ENCODE measurements at regions of chr11 and their contacts with region 1.

Region 1: GRCh38 chr11:121194731-121195596 is 93.9 kb downstream of the TECTA start:
- DNase-seq: peak; percentile 64
- ATAC-seq: peak; percentile 98
- H3K4me3 ChIP-seq: no peak overlapping the region
- H3K27ac ChIP-seq: no peak overlapping the region
- H3K4me1 ChIP-seq: no peaks in the 10 kb centered on the region
- H3K27me3 ChIP-seq: peaks cover 15% of the 10 kb centered on the region
- CTCF ChIP-seq: peak; percentile 74
- POLR2A ChIP-seq: no peak
- RAD21 ChIP-seq: peak; percentile 72

Region 2: GRCh38 chr11:120539667-120540369 is 655.1 kb before region 1 on chr11:
- CTCF ChIA-PET with region 1: no interaction called
- POLR2A ChIA-PET with region 1: no interaction called
- dilution Hi-C with region 1: no loop called
- in situ Hi-C with region 1: no loop called
- intact Hi-C with region 1: no loop called
- DNase-seq: peak; percentile 67
- ATAC-seq: no peak
- H3K4me3 ChIP-seq: no peak overlapping the region
- H3K27ac ChIP-seq: no peak overlapping the region
- H3K4me1 ChIP-seq: peaks cover 3% of the 10 kb centered on the region; the same call in 1 of the 2 replicates
- H3K27me3 ChIP-seq: no peaks in the 10 kb centered on the region
- CTCF ChIP-seq: no peak
- POLR2A ChIP-seq: no peak
- RAD21 ChIP-seq: no peak

Region 3: GRCh38 chr11:120682866-120683265 is 512.1 kb before region 1 on chr11:
- CTCF ChIA-PET with region 1: interaction called, 3 read pairs
- POLR2A ChIA-PET with region 1: no interaction called
- dilution Hi-C with region 1: no loop called
- in situ Hi-C with region 1: no loop called
- intact Hi-C with region 1: loop called (anchors 10 kb)
- DNase-seq: peak; percentile 82
- ATAC-seq: peak; percentile 85
- H3K4me3 ChIP-seq: no peak overlapping the region
- H3K27ac ChIP-seq: no peak overlapping the region
- H3K4me1 ChIP-seq: peaks cover 3% of the 10 kb centered on the region; the same call in 1 of the 2 replicates
- H3K27me3 ChIP-seq: peaks cover 10% of the 10 kb centered on the region
- CTCF ChIP-seq: no peak
- POLR2A ChIP-seq: no peak
- RAD21 ChIP-seq: no peak

Region 4: GRCh38 chr11:120710354-120711131 is 484.4 kb before region 1 on chr11:
- CTCF ChIA-PET with region 1: no interaction called
- POLR2A ChIA-PET with region 1: no interaction called
- dilution Hi-C with region 1: no loop called
- in situ Hi-C with region 1: no loop called
- intact Hi-C with region 1: loop called (anchors 10 kb)
- DNase-seq: peak; percentile 87
- ATAC-seq: peak; percentile 94
- H3K4me3 ChIP-seq: no peak overlapping the region
- H3K27ac ChIP-seq: peak overlapping the region; percentile 66; the same call in 1 of the 2 replicates
- H3K4me1 ChIP-seq: peaks cover 11% of the 10 kb centered on the region; the same call in 1 of the 2 replicates
- H3K27me3 ChIP-seq: peaks cover 3% of the 10 kb centered on the region; the same call in 1 of the 2 replicates
- CTCF ChIP-seq: no peak
- POLR2A ChIP-seq: no peak
- RAD21 ChIP-seq: no peak

Region 5: DNA sequence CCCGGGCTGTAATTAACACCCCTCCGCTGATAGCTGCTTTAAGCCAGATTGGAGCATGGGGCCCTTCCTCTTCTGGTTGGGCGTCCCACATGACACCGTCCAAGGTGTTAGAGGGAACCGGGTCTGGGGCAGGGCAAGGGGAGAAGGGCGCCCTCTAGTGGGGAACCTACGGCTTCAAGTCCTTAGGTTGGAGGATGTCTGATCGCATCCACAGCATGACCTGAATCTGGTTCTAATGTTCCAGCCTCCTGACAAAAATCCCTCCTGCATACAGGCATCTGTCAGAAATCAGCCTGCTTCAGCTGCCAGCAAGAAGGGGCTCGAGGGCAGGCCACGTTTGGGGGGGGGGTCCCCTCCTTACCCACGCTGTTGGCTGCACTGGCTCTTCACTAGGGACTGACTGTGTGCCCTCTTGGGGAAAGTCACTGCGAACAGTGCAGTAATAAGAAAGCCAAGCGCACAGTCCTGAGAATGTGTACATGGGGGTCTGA is 265.3 kb before region 1 on chr11:
- CTCF ChIA-PET with region 1: interaction called, 3 read pairs
- POLR2A ChIA-PET with region 1: no interaction called
- dilution Hi-C with region 1: no loop called
- in situ Hi-C with region 1: no loop called
- intact Hi-C with region 1: loop called (anchors 5 kb)
- DNase-seq: peak; percentile 26
- ATAC-seq: peak; percentile 65; the same call in 1 of the 2 replicates
- H3K4me3 ChIP-seq: no peak overlapping the region
- H3K27ac ChIP-seq: no peak overlapping the region
- H3K4me1 ChIP-seq: no peaks in the 10 kb centered on the region
- H3K27me3 ChIP-seq: peaks cover 4% of the 10 kb centered on the region; the same call in 1 of the 2 replicates
- CTCF ChIP-seq: peak; percentile 47
- POLR2A ChIP-seq: no peak
- RAD21 ChIP-seq: peak; percentile 48

Region 6: DNA sequence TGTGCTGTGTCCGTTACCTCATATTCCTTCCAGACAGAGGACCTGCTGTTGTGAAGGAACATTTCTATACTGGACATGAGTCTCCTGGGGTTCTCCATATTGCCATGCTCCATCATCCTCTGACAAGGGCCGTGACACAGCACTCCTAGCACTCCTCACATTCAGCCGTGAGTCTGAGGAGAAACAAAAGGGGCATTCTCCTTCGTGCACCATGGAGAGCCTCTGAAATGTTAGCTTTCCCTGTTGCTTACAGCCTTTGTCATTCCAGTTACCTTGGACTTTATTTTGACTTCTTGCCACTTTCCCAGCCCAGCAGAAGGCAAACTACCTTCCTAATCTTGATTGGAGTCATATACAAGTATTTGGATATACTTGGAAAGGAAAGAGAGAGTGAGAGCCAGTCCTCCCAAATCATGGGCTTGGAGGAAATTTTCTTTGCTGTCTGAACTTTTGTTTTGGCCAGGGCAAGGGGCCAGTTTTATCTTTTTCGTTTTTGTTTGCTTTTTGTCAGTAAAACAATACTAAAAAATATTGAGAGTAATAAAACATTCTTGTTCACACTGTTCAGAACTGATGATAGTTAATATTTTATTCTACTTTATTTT is 123.0 kb before region 1 on chr11:
- CTCF ChIA-PET with region 1: no interaction called
- POLR2A ChIA-PET with region 1: no interaction called
- dilution Hi-C with region 1: no loop called
- in situ Hi-C with region 1: no loop called
- intact Hi-C with region 1: no loop called
- DNase-seq: no peak
- ATAC-seq: no peak
- H3K4me3 ChIP-seq: no peak overlapping the region
- H3K27ac ChIP-seq: no peak overlapping the region
- H3K4me1 ChIP-seq: peaks cover 5% of the 10 kb centered on the region; the same call in 1 of the 2 replicates
- H3K27me3 ChIP-seq: no peaks in the 10 kb centered on the region
- CTCF ChIP-seq: no peak
- POLR2A ChIP-seq: no peak
- RAD21 ChIP-seq: no peak

Region 7: DNA sequence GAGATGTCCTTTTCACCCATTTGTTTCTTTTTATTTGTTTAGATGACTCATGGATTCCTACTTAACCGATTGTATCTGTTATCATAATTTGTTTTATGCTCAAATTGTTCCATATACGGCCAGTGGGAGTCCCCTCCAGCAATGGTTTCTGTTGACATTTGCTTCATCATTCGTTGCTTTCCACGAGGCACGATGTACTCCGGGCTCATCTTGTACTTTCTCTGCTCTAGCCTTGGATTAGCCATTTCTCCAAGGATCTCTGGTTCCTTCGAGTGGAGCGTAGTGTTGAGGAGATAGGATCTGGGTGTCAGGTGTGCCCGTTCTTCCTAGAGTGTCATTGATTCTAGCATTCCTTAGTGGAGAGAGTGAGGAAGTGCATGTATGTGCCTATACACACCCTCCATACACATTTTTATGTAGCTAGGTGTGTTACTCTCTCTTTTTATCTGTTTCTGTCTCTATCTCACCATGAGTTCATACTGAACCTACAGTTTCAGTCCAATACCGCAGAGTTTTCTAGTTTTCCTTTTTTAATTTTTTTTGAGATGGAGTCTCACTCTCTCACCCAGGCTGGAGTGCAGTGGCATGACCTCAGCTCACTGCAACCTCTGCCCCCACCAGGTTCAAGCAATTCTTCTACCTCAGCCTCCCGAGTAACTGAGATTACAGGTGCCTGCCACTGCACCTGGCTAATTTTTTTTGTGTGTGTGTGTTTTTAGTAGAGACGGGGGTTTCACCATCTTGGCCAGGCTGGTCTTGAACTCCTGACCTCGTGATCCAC is 62.6 kb before region 1 on chr11:
- CTCF ChIA-PET with region 1: no interaction called
- POLR2A ChIA-PET with region 1: no interaction called
- dilution Hi-C with region 1: no loop called
- in situ Hi-C with region 1: no loop called
- intact Hi-C with region 1: no loop called
- DNase-seq: no peak
- ATAC-seq: no peak
- H3K4me3 ChIP-seq: no peak overlapping the region
- H3K27ac ChIP-seq: no peak overlapping the region
- H3K4me1 ChIP-seq: no peaks in the 10 kb centered on the region
- H3K27me3 ChIP-seq: peaks cover 3% of the 10 kb centered on the region; the same call in 1 of the 2 replicates
- CTCF ChIP-seq: no peak
- POLR2A ChIP-seq: no peak
- RAD21 ChIP-seq: no peak

Region 8: GRCh38 chr11:121207485-121208115 is 12.6 kb after region 1 on chr11:
- CTCF ChIA-PET with region 1: interaction called, 12 read pairs
- POLR2A ChIA-PET with region 1: no interaction called
- dilution Hi-C with region 1: no loop called
- in situ Hi-C with region 1: no loop called
- intact Hi-C with region 1: no loop called
- DNase-seq: no peak
- ATAC-seq: no peak
- H3K4me3 ChIP-seq: no peak overlapping the region
- H3K27ac ChIP-seq: no peak overlapping the region
- H3K4me1 ChIP-seq: no peaks in the 10 kb centered on the region
- H3K27me3 ChIP-seq: peaks cover 2% of the 10 kb centered on the region; the same call in 1 of the 2 replicates
- CTCF ChIP-seq: no peak
- POLR2A ChIP-seq: no peak
- RAD21 ChIP-seq: no peak